Heart left ventricle (tissue), 16 donors: ENCODE measurements at regions of chr10 and their contacts with region 1.

Region 1: DNA sequence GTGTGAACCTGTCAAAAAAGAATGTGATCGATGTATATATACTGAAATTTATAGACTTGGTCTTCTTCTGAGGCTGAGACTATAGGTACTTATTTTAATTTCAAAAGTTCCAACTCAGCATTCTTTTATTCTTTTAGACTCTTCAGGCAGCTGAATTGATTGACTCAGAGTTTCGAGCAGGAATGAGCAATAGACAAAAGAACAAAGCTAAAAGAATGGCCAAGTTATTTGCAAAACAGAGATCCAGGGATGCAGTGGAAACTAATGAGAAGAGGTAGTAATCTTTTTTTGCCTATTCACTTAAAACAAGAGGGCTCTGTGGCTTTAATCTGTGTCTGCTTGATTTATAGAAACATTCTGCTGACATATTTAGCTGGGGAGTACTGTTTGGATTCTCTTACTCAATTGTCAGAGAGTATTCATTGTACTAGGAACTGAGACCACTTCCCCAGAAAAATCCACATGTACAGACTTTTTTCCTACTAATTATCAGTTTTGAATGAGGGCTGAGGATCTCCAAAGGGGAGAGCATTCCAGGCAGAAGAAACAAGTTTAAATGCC is 30.1 kb downstream of the BTAF1 start:
- DNase-seq: no peak
- ATAC-seq: no peak
- H3K4me3 ChIP-seq: no peak overlapping the region
- H3K27ac ChIP-seq: no peak overlapping the region
- H3K4me1 ChIP-seq: no peaks in the 10 kb centered on the region
- H3K27me3 ChIP-seq: no peaks in the 10 kb centered on the region
- CTCF ChIP-seq: no peak
- POLR2A ChIP-seq: no peak

Region 2: GRCh38 chr10:91838199-91838598 is 115.5 kb before region 1 on chr10:
- intact Hi-C with region 1: loop called in 1 of 10 experiments (anchors 10 kb)
- DNase-seq: no peak
- ATAC-seq: no peak
- H3K4me3 ChIP-seq: no peak overlapping the region
- H3K27ac ChIP-seq: no peak overlapping the region
- H3K4me1 ChIP-seq: no peaks in the 10 kb centered on the region
- H3K27me3 ChIP-seq: no peaks in the 10 kb centered on the region
- CTCF ChIP-seq: no peak
- POLR2A ChIP-seq: no peak

Region 3: GRCh38 chr10:92031580-92031979 is 77.9 kb after region 1 on chr10:
- intact Hi-C with region 1: no loop called
- DNase-seq: no peak
- ATAC-seq: no peak
- H3K4me3 ChIP-seq: no peak overlapping the region
- H3K27ac ChIP-seq: no peak overlapping the region
- H3K4me1 ChIP-seq: no peaks in the 10 kb centered on the region
- H3K27me3 ChIP-seq: no peaks in the 10 kb centered on the region
- CTCF ChIP-seq: no peak
- POLR2A ChIP-seq: no peak